GM13976 (cell line): ENCODE measurements at regions of chr5 and their contacts with region 1.

Region 1: DNA sequence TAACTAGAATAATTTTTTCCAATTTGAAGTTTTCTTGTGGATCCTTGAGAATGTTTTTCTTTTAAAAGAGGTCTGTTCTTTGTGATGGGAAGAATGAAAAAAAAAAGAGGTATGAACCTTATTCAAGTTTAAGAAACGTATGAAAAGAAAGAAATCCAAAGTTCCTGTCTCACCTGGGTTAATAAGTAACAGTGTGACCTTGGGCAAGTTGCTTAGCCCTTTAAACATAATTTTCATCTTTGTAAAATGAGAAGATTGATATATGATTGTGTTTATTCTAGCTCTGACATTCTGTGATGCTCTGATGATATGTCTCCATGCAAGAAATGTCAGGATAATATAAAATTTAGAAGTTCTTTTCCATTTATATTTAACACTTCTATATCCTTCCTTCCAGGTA is 19.3 kb downstream of the SLC26A2 start:
- DNase-seq: no peak
- CTCF ChIP-seq: no peak

Region 2: DNA sequence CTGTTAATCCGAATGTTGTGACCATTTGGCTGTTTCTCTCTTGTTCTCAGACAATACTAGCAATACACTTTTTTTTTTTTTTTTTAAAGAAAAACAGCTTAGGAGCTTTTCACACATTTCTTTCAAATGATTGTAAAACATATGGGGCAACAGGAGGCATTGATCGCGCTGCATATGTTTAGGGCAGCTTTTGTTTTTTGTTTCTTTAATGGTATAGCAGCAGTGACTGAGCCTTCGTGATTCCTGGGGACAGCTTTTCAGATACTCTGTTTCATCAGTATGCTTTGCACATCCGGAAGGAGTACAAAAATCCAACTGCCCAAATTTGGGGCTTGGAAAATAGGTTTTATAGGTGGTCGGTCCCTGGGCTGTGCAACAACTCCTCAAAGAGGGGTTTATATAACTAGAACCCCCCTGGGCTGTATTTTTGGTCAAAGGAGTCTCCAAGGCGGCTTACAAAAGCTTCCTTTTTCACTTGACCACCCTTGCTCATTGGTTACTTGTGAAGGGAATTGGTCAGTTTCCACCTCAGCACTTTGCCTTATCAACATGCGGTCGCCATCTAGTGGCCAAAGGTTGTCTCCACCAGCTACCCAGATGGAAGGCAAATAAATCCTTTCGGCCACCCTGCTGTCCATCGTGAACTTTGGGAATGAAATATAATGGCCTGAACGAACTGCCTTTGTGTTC is 127.1 kb before region 1 on chr5:
- in situ Hi-C with region 1: loop called (anchors 10 kb)
- DNase-seq: peak; percentile 74
- CTCF ChIP-seq: peak; percentile 84